ENCODE measurements at regions of chr6 and their contacts with region 1.

Region 1: GRCh38 chr6:32477808-32478207 is 38.1 kb downstream of the HLA-DRA start:
- DNase-seq: no peak
- ATAC-seq: no peak
- H3K4me3 ChIP-seq: no peak overlapping the region
- H3K4me3 Mint-ChIP-seq: no peak overlapping the region
- H3K27ac ChIP-seq: no peak overlapping the region
- H3K27ac Mint-ChIP-seq: no peak overlapping the region
- H3K4me1 ChIP-seq: no peaks in the 10 kb centered on the region
- H3K4me1 Mint-ChIP-seq: peaks cover 3 to 5% (median 3%) of the 10 kb centered on the region in 3 donors
- H3K27me3 ChIP-seq: peaks cover 0 to 4% of the 10 kb centered on the region in 2 experiments
- H3K27me3 Mint-ChIP-seq: peaks cover 28 to 29% of the 10 kb centered on the region in 2 donors

Region 2: GRCh38 chr6:32415511-32416019 is 62.2 kb before region 1 on chr6:
- CTCF ChIA-PET with region 1: no interaction called
- POLR2A ChIA-PET with region 1: no interaction called
- DNase-seq: peak; percentile 39 to 85 (median 68)
- ATAC-seq: peak; percentile 52 to 79 (median 67)
- H3K4me3 ChIP-seq: no peak overlapping the region
- H3K4me3 Mint-ChIP-seq: peak overlapping the region in 2 of 3 donors; percentile 26 to 29
- H3K27ac ChIP-seq: no peak overlapping the region
- H3K27ac Mint-ChIP-seq: no peak overlapping the region
- H3K4me1 ChIP-seq: peaks cover 0 to 9% of the 10 kb centered on the region in 2 experiments
- H3K4me1 Mint-ChIP-seq: peaks cover 11 to 16% (median 11%) of the 10 kb centered on the region in 3 donors
- H3K27me3 ChIP-seq: peaks cover 5 to 26% of the 10 kb centered on the region in 2 experiments
- H3K27me3 Mint-ChIP-seq: peaks cover 47 to 53% of the 10 kb centered on the region in 2 donors

Region 3: GRCh38 chr6:32445321-32445854 is 32.4 kb before region 1 on chr6:
- CTCF ChIA-PET with region 1: no interaction called
- POLR2A ChIA-PET with region 1: interaction called in 1 of 2 experiments, 10 read pairs
- DNase-seq: no peak
- ATAC-seq: no peak
- H3K4me3 ChIP-seq: no peak overlapping the region
- H3K4me3 Mint-ChIP-seq: no peak overlapping the region
- H3K27ac ChIP-seq: no peak overlapping the region
- H3K27ac Mint-ChIP-seq: no peak overlapping the region
- H3K4me1 ChIP-seq: no peaks in the 10 kb centered on the region
- H3K4me1 Mint-ChIP-seq: peaks cover 0 to 8% (median 0%) of the 10 kb centered on the region in 3 donors
- H3K27me3 ChIP-seq: peaks cover 0 to 13% of the 10 kb centered on the region in 2 experiments
- H3K27me3 Mint-ChIP-seq: peaks cover 21 to 37% of the 10 kb centered on the region in 2 donors

Region 4: DNA sequence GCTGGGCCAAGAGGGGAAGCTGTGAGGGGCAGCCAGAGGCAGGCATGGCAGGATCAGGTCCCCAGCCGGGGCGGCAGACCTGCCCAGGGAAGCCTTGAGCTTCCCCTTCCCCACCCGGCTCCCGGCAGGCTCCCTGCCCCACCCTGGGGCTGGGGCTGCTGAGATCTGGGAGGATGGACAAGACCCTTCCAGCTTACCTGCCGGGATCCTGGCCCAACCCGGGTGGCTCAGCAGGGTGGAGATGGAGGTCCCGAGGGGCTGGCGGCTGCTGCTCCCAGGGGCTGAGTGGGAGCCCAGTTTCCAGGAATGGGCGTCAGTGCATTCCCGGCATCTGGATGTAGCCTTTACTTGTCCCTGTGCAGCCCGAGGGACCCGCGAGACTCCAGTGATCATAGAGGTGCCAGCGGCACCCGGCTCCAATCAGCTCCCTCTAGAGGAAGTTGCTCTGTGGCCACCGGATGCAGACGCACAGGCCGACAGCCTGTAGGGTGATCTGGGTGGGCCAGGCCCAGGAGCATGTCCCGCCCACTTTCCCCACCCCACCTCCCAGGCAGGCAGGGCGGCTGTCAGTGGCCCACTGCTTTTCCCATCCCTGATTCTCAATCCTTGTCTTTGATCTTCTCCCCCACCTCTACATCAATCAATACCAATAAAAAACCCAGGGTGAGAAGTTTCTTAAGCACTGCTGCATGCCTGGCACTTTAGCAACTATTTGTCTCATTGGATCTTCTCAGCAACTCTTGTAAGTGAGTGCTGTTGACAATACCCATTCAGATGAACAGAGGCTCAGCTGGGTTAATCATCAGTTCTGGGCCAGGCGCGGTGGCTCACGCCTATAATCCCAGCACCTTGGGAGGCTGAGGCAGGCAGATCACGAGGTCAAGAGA is 1102.3 kb after region 1 on chr6 and contains the start of gene BAK1:
- CTCF ChIA-PET with region 1: no interaction called
- POLR2A ChIA-PET with region 1: no interaction called
- DNase-seq: peak; percentile 62 to 89 (median 78)
- ATAC-seq: peak; percentile 96 to 97 (median 96)
- H3K4me3 ChIP-seq: peak within 1 kb of the TSS; percentile 79 to 94
- H3K4me3 Mint-ChIP-seq: peak within 1 kb of the TSS; percentile 93 to 98 (median 97)
- H3K27ac ChIP-seq: peak within 1 kb of the TSS; percentile 69
- H3K27ac Mint-ChIP-seq: peak within 1 kb of the TSS; percentile 98 to 100
- H3K4me1 ChIP-seq: peaks cover 15 to 51% of the 10 kb centered on the region in 2 experiments
- H3K4me1 Mint-ChIP-seq: peaks cover 28 to 41% (median 32%) of the 10 kb centered on the region in 3 donors
- H3K27me3 ChIP-seq: no peaks in the 10 kb centered on the region
- H3K27me3 Mint-ChIP-seq: no peaks in the 10 kb centered on the region
- total RNA-seq, gene BAK1: 22.9 to 31.6 (median 27.9) TPM